GM18951 (cell line): ENCODE measurements at regions of chr3 and their contacts with region 1.

Region 1: DNA sequence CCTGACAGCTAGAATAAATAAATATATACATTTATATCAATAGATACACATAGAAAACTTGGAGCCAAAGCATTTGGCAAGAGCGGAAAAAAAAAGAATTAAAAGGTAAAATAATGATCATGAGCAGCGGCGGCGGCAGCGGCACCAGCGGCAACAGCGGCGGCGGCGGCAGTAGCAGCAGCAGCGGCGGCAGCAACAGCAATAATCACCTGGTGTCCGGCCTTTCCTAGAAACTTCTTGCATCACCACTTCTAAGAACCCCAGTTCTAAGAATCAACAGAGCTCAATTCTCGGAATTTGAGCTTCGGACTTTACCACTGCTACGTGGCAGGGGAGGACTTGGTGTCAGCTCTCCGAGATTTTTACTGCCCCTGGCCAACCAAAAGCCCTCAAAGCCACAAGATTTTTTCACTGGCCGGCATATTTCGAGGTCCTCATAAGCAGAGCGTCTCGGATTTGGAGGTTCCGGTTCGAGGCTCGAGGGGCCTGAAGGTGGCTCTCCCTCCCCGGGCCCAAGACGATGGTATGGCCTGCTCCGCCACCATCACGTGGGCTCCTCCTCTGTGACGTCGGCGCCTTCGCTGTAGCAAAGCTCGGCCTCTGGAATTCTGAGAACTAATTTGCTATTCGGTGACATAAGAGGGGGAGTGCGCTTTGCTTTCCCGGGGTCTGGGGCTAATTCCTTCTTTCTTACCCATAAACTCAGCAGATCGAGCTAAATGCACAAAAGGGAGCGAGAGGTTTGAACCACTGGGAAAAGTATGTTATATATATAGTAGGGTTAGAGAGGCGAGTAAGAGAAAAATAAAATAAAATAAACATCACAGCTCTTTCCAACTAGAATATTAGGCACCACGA is at the start of gene BCL6:
- POLR2A ChIP-seq: no peak

Region 2: DNA sequence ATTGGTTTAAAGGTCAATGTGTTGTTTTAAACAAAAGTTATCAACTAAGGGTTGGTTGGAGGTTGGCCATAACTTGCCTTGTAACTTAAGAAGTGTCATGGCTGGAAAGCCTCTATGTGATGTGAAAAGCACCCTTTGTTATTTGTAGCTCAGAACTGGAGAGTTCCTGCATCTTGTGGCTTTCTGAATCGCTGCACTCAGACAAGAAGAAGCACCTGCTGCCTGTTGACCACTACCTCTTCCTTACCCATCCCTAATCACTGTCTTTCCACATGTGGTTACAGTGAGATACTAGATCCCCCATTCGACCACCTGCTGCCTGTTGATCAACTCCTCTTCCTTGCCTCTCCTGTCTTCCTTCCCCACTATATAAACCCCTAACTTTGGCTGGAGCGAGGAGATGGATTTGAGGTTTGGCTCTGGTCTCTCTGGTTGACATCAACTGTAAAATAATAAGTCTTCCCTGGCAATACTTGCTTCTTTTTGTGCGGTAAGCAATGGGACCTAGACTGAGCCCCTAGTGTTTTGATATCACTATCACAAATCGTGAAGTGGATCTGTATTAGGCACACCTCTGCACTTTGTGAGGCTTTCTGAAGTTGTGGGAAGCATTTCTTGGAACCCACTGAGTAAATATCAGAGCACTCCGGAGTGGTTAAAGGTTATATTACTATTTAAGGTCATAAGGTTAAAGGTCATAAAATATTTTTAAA is 620.0 kb before region 1 on chr3:
- in situ Hi-C with region 1: no loop called
- POLR2A ChIP-seq: no peak

Region 3: DNA sequence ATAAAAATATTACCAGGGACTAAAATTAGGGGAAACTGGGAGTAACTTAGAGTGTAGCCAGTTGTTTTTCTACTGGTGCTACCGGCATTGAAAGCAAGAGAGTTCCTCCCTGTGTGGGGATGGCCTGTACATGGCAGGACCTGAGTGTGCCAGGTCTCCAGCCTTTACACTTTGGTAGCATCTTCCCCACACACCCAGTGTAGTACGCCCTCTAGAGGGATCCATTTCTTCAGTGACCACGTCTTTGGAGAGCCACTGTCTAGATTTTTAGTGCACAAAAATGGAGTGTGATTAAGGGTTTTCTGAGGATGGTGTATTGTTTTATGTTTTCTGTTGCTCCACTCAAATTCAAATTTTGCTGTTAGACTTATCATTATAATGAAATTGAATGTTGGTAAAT is 919.4 kb after region 1 on chr3:
- in situ Hi-C with region 1: loop called (anchors 25 kb)
- POLR2A ChIP-seq: no peak

Region 4: GRCh38 chr3:188749010-188749617 is 1003.7 kb after region 1 on chr3:
- in situ Hi-C with region 1: loop called (anchors 10 kb)
- POLR2A ChIP-seq: no peak

Region 5: GRCh38 chr3:189148081-189148507 is 1402.7 kb after region 1 on chr3:
- in situ Hi-C with region 1: loop called (anchors 25 kb)
- POLR2A ChIP-seq: no peak